PC-3 (cell line): ENCODE measurements at regions of chr7 and their contacts with region 1.

Region 1: DNA sequence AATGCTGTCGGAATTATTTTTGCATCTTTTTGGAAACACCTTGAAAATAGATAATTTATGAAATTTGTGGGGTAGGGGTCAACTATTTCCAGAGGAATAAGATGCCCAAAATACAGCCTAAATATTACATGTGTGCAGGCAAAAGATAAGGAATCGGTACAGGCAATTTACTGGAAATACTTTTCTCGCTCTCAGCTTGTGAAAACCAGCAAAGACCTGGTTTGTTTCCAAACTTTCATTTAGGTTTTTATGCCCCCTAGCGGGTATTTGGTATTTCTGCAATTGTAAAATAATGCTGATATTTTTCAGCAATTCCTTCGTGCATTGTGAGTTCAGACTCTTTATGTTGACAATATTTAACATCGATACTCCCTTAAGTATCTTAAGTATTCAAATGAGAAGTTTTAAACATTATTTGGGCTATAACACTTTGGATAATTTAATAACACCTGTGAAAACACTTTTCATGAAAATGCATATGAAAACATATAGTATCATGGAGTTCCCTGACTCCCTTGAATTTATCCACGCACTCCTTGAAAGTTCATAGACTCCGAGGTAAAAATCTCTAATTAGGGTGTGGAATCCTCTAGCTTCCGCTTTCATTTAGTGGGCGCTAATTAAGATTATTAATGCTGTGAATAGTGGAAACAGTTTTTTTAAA is 132.4 kb downstream of the TSPAN12 start:
- DNase-seq: peak; percentile 64
- ATAC-seq: no peak
- H3K4me3 ChIP-seq: peak overlapping the region; percentile 6; the same call in 1 of the 2 replicates
- H3K27ac ChIP-seq: no peak overlapping the region
- H3K4me1 ChIP-seq: no peaks in the 10 kb centered on the region
- H3K27me3 ChIP-seq: no peaks in the 10 kb centered on the region
- CTCF ChIP-seq: peak; percentile 79

Region 2: DNA sequence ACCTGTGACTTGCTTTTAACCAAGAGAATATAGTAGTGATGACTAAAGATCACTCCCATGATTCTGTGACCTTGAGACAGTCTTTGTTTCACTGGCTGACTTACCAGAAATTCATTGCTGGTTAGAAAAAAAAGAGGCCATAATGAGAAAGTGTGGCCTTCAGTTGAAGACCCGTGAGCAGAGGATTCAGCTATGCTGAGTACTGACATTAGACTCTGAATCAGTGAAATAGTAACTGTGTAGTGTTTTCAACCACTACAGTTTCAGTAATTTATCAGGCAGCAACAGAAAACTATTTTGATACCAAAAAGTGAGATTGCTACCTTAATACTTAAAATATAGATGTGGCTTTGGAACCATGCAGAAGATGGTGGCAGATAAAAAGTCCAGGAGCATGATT is 750.5 kb before region 1 on chr7:
- CTCF ChIA-PET with region 1: no interaction called
- POLR2A ChIA-PET with region 1: no interaction called
- intact Hi-C with region 1: no loop called
- DNase-seq: no peak
- ATAC-seq: no peak
- H3K4me3 ChIP-seq: no peak overlapping the region
- H3K27ac ChIP-seq: no peak overlapping the region
- H3K4me1 ChIP-seq: no peaks in the 10 kb centered on the region
- H3K27me3 ChIP-seq: no peaks in the 10 kb centered on the region
- CTCF ChIP-seq: no peak

Region 3: DNA sequence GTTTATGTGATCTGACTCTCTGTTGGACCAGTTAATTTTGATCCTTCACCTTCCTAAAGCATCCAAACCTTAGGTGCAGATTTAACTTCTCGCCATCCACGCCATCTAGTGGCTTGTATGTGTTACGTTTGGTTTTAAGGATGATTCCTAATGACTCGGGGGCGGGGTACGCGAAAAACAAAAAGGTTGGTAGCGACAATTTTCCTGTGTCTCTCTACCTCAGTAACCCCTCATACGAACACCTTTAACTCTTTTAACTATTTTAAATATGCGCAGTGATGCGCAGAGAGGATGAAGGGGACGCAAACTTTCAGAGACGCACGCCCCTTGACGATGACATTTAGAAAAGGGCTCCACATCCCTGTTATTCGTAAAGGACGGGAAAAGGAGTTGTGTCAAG is 453.2 kb before region 1 on chr7:
- CTCF ChIA-PET with region 1: no interaction called
- POLR2A ChIA-PET with region 1: no interaction called
- intact Hi-C with region 1: loop called (anchors 5 kb)
- DNase-seq: peak; percentile 66
- ATAC-seq: peak; percentile 67
- H3K4me3 ChIP-seq: peak overlapping the region; percentile 72
- H3K27ac ChIP-seq: no peak overlapping the region
- H3K4me1 ChIP-seq: no peaks in the 10 kb centered on the region
- H3K27me3 ChIP-seq: peaks cover 7% of the 10 kb centered on the region
- CTCF ChIP-seq: peak; percentile 86

Region 4: GRCh38 chr7:120583899-120584586 is 141.5 kb before region 1 on chr7:
- CTCF ChIA-PET with region 1: interaction called, 3 read pairs
- POLR2A ChIA-PET with region 1: no interaction called
- intact Hi-C with region 1: loop called (anchors 5 kb)
- DNase-seq: peak; percentile 3
- ATAC-seq: no peak; the same call in 1 of the 2 replicates
- H3K4me3 ChIP-seq: no peak overlapping the region
- H3K27ac ChIP-seq: no peak overlapping the region
- H3K4me1 ChIP-seq: no peaks in the 10 kb centered on the region
- H3K27me3 ChIP-seq: no peaks in the 10 kb centered on the region
- CTCF ChIP-seq: no peak

Region 5: GRCh38 chr7:120703585-120704240 is 21.8 kb before region 1 on chr7:
- CTCF ChIA-PET with region 1: no interaction called
- POLR2A ChIA-PET with region 1: no interaction called
- intact Hi-C with region 1: no loop called
- DNase-seq: no peak
- ATAC-seq: no peak
- H3K4me3 ChIP-seq: no peak overlapping the region
- H3K27ac ChIP-seq: no peak overlapping the region
- H3K4me1 ChIP-seq: no peaks in the 10 kb centered on the region
- H3K27me3 ChIP-seq: no peaks in the 10 kb centered on the region
- CTCF ChIP-seq: no peak